GM12878 (cell line): ENCODE measurements at regions of chr18 and their contacts with region 1.

Region 1: GRCh38 chr18:46073474-46074331 is 1.6 kb upstream of the PSTPIP2 start:
- DNase-seq: no peak
- ATAC-seq: peak; percentile 63
- H3K4me3 ChIP-seq: no peak overlapping the region
- H3K27ac ChIP-seq: no peak overlapping the region
- H3K4me1 ChIP-seq: peaks cover 14% of the 10 kb centered on the region
- H3K27me3 ChIP-seq: no peaks in the 10 kb centered on the region; a peak in 1 of 4 replicates
- CTCF ChIP-seq: peak; percentile 44 to 68 (median 51); a peak in 5 of 6 replicates
- EP300 ChIP-seq: no peak
- POLR2A ChIP-seq: no peak
- RAD21 ChIP-seq: peak; percentile 91

Region 2: GRCh38 chr18:45416168-45416567 is 657.5 kb before region 1 on chr18:
- CTCF ChIA-PET with region 1: no interaction called
- POLR2A ChIA-PET with region 1: no interaction called
- RAD21 ChIA-PET with region 1: no interaction called
- SMC1A ChIA-PET with region 1: no interaction called
- in situ Hi-C with region 1: no loop called
- intact Hi-C with region 1: no loop called
- DNase-seq: no peak
- ATAC-seq: no peak
- H3K4me3 ChIP-seq: no peak overlapping the region
- H3K27ac ChIP-seq: no peak overlapping the region
- H3K4me1 ChIP-seq: no peaks in the 10 kb centered on the region
- H3K27me3 ChIP-seq: no peaks in the 10 kb centered on the region
- CTCF ChIP-seq: no peak
- EP300 ChIP-seq: no peak
- POLR2A ChIP-seq: no peak
- RAD21 ChIP-seq: no peak

Region 3: DNA sequence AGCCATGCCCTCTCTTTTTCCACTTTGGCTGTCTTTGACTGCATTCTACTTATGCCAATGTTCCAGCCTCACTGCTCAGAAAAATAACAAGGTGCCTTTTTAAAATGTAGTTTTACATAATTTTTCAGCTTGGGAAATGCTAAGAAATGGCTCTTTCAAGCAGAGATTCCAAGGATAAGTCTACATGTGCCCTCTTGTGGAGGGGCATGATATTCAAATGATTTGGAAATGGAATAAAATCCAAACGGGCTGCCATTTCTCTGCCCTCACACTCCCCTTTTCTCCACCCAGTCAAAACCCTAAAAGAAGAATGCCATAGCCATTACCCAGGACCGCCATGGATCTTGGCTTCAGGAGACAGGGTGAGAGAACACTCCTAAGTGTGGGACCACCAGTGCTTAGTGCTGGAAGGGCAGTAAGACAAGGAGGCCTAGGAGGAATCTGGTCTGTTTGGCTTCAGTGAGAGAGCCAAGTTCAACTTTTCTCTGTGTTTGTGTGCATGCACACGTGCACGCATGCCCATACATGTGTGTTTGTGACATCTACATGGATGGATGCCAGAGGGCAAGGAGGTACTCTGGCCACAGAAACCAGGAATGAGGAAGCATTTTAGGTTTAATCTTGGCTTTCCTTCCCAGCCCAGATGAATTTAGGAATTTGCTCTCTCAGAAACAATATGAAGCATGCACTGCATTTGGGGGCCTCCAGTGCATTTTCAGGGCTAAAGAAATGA is 632.4 kb before region 1 on chr18:
- CTCF ChIA-PET with region 1: no interaction called
- POLR2A ChIA-PET with region 1: no interaction called
- RAD21 ChIA-PET with region 1: no interaction called
- SMC1A ChIA-PET with region 1: no interaction called
- in situ Hi-C with region 1: no loop called
- intact Hi-C with region 1: no loop called
- DNase-seq: no peak
- ATAC-seq: no peak
- H3K4me3 ChIP-seq: no peak overlapping the region
- H3K27ac ChIP-seq: no peak overlapping the region
- H3K4me1 ChIP-seq: no peaks in the 10 kb centered on the region
- H3K27me3 ChIP-seq: no peaks in the 10 kb centered on the region; a peak in 2 of 4 replicates
- CTCF ChIP-seq: no peak
- EP300 ChIP-seq: no peak
- POLR2A ChIP-seq: no peak
- RAD21 ChIP-seq: no peak

Region 4: DNA sequence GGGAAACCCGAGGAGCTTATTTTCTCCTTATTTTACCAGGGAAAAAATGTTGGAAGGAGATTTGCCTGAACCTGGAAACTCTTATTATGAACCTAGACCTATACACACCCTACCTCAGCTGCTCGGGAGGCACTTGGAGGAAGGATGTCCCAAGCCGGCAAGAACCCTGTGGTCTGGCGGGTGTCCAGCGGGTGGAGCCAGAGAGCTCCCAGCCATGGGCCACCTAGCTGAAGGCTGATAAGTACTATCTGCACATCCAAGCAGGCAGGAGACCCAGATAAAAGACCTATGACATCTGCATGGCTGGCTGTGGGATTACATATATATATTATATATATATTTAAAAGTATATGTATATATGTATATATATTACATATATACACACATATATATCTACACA is 350.8 kb before region 1 on chr18:
- CTCF ChIA-PET with region 1: interaction called, 16 read pairs
- POLR2A ChIA-PET with region 1: no interaction called
- RAD21 ChIA-PET with region 1: interaction called, 5 read pairs
- SMC1A ChIA-PET with region 1: interaction called, 14 read pairs
- in situ Hi-C with region 1: no loop called
- intact Hi-C with region 1: no loop called
- DNase-seq: peak; percentile 27
- ATAC-seq: peak; percentile 100
- H3K4me3 ChIP-seq: no peak overlapping the region
- H3K27ac ChIP-seq: no peak overlapping the region
- H3K4me1 ChIP-seq: no peaks in the 10 kb centered on the region
- H3K27me3 ChIP-seq: no peaks in the 10 kb centered on the region
- CTCF ChIP-seq: peak; percentile 74 to 93 (median 77)
- EP300 ChIP-seq: no peak
- POLR2A ChIP-seq: no peak
- RAD21 ChIP-seq: peak; percentile 78

Region 5: GRCh38 chr18:45879681-45880655 is 193.7 kb before region 1 on chr18:
- CTCF ChIA-PET with region 1: interaction called, 27 read pairs
- POLR2A ChIA-PET with region 1: no interaction called
- RAD21 ChIA-PET with region 1: interaction called, 24 read pairs
- SMC1A ChIA-PET with region 1: interaction called, 8 read pairs
- in situ Hi-C with region 1: no loop called
- intact Hi-C with region 1: no loop called
- DNase-seq: peak; percentile 17
- ATAC-seq: peak; percentile 96
- H3K4me3 ChIP-seq: no peak overlapping the region
- H3K27ac ChIP-seq: no peak overlapping the region
- H3K4me1 ChIP-seq: peaks cover 5% of the 10 kb centered on the region; the same call in 1 of the 2 replicates
- H3K27me3 ChIP-seq: no peaks in the 10 kb centered on the region
- CTCF ChIP-seq: peak; percentile 95 to 99 (median 99)
- EP300 ChIP-seq: no peak
- POLR2A ChIP-seq: no peak
- RAD21 ChIP-seq: peak; percentile 93

Region 6: DNA sequence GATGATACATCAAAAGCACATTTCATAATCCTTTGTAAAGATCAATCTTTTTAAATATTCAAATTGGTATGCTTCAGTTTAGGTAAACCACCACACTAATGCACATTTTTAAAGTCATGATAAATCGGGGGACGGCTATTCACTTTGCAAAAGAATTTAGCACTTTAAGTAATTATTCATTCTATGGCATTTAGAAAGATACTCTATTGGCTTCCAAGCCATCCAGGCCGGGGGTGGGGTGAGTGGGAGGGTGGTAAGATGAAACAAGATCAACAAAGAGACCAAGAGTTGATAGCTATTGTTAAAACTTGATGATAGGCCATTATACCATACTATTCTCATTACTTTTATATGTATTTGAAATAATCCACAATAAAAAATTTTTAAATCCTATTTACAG is 147.6 kb before region 1 on chr18:
- CTCF ChIA-PET with region 1: interaction called, 16 read pairs
- POLR2A ChIA-PET with region 1: no interaction called
- RAD21 ChIA-PET with region 1: interaction called, 4 read pairs
- SMC1A ChIA-PET with region 1: interaction called, 4 read pairs
- in situ Hi-C with region 1: loop called (anchors 5 kb)
- intact Hi-C with region 1: loop called (anchors 2 kb)
- DNase-seq: no peak
- ATAC-seq: no peak
- H3K4me3 ChIP-seq: no peak overlapping the region
- H3K27ac ChIP-seq: no peak overlapping the region
- H3K4me1 ChIP-seq: no peaks in the 10 kb centered on the region
- H3K27me3 ChIP-seq: no peaks in the 10 kb centered on the region
- CTCF ChIP-seq: no peak
- EP300 ChIP-seq: no peak
- POLR2A ChIP-seq: no peak
- RAD21 ChIP-seq: no peak

Region 7: DNA sequence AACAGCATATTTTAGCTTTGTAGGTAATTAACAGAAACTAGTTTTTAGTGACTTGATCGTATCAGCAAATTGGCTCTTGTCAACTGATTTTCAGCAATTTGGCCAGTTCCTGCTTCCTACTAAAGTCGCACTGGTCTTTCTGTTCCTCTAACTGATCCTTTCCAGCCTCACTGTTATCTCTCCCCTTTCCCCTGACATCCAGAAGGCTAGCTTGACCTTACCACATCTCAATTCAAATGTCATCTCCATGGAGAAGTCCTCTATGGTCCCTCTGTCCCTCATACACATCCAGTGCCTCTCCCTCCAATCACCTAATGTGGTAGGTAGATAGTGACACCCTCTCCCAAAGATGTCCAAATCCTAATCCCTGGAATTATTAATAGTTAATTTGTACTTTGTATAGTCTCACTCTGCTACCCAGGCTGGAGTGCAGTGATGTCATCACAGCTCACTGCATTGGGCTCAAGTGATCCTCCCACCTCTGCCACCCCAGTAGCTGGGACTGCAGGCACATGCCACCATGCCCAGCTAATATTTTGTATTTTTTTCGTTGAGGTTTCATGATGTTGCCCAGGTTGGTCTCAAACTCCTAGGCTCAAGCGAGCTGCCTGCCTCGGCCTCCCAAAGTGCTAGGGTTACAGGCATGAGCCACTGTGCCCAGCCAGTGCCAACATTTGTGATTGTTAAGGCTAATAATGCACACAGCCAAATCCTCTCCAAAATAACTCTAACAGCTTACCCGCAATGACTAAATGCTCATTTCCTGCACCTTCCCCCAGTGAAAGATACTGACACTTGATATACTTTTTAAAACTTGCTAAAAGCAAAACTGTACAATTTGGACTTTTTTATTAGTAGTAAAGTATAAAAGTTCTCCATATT is 18.5 kb before region 1 on chr18:
- CTCF ChIA-PET with region 1: interaction called, 18 read pairs
- POLR2A ChIA-PET with region 1: no interaction called
- RAD21 ChIA-PET with region 1: interaction called, 9 read pairs
- SMC1A ChIA-PET with region 1: interaction called, 13 read pairs
- in situ Hi-C with region 1: no loop called
- intact Hi-C with region 1: no loop called
- DNase-seq: no peak
- ATAC-seq: peak; percentile 83
- H3K4me3 ChIP-seq: no peak overlapping the region
- H3K27ac ChIP-seq: peak overlapping the region; percentile 61
- H3K4me1 ChIP-seq: peaks cover 11% of the 10 kb centered on the region
- H3K27me3 ChIP-seq: no peaks in the 10 kb centered on the region
- CTCF ChIP-seq: no peak
- EP300 ChIP-seq: no peak
- POLR2A ChIP-seq: no peak
- RAD21 ChIP-seq: no peak

Region 8: DNA sequence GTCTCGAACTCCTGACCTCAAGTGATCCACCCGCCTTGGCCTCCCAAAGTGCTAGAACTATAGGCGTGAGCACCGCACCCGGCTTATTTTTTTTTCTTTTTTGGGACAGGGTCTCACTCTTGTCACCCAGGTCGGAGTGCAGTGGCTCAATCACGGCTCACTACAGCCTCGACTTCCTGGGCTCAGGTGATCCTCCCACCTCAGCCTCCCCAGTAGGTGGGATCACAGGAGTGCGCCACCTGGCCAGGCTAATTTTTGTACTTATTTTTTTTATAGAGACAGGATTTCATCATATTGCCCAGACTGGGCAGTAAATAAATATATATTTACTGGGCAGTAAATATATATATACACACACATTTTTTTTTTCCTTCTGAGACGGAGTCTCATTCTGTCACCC is 21.8 kb after region 1 on chr18:
- CTCF ChIA-PET with region 1: interaction called, 11 read pairs
- POLR2A ChIA-PET with region 1: interaction called, 3 read pairs
- RAD21 ChIA-PET with region 1: interaction called, 4 read pairs
- SMC1A ChIA-PET with region 1: interaction called, 6 read pairs
- in situ Hi-C with region 1: no loop called
- intact Hi-C with region 1: no loop called
- DNase-seq: no peak
- ATAC-seq: no peak
- H3K4me3 ChIP-seq: peak overlapping the region; percentile 75
- H3K27ac ChIP-seq: no peak overlapping the region
- H3K4me1 ChIP-seq: no peaks in the 10 kb centered on the region; the same call in 1 of the 2 replicates
- H3K27me3 ChIP-seq: no peaks in the 10 kb centered on the region
- CTCF ChIP-seq: no peak
- EP300 ChIP-seq: no peak
- POLR2A ChIP-seq: no peak
- RAD21 ChIP-seq: no peak

Region 9: DNA sequence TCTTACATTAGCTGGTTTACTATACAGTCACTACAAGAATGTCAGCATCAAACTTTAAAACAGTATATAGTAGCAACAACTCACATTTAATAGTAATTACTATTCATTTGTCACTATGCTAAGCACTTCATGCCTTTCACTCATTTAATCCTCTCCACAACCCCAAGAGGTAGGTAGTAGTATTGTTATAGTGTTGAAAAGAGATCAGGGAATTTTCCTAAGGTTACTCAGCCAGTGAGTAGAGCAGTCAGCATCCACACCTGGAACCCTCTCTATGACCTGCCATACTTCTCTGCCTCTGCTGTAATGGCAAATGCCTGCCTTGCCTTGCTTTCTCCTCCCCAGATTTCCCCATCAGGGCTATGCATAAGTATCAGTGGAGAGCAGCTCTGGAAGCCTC is 1153.0 kb after region 1 on chr18:
- CTCF ChIA-PET with region 1: no interaction called
- POLR2A ChIA-PET with region 1: no interaction called
- RAD21 ChIA-PET with region 1: no interaction called
- SMC1A ChIA-PET with region 1: no interaction called
- in situ Hi-C with region 1: no loop called
- intact Hi-C with region 1: no loop called
- DNase-seq: no peak
- ATAC-seq: no peak
- H3K4me3 ChIP-seq: no peak overlapping the region
- H3K27ac ChIP-seq: no peak overlapping the region
- H3K4me1 ChIP-seq: no peaks in the 10 kb centered on the region
- H3K27me3 ChIP-seq: no peaks in the 10 kb centered on the region; a peak in 1 of 4 replicates
- CTCF ChIP-seq: no peak
- EP300 ChIP-seq: no peak
- POLR2A ChIP-seq: no peak
- RAD21 ChIP-seq: no peak